GM12878 (cell line): ENCODE measurements at regions of chr14 and their contacts with region 1.

Region 1: DNA sequence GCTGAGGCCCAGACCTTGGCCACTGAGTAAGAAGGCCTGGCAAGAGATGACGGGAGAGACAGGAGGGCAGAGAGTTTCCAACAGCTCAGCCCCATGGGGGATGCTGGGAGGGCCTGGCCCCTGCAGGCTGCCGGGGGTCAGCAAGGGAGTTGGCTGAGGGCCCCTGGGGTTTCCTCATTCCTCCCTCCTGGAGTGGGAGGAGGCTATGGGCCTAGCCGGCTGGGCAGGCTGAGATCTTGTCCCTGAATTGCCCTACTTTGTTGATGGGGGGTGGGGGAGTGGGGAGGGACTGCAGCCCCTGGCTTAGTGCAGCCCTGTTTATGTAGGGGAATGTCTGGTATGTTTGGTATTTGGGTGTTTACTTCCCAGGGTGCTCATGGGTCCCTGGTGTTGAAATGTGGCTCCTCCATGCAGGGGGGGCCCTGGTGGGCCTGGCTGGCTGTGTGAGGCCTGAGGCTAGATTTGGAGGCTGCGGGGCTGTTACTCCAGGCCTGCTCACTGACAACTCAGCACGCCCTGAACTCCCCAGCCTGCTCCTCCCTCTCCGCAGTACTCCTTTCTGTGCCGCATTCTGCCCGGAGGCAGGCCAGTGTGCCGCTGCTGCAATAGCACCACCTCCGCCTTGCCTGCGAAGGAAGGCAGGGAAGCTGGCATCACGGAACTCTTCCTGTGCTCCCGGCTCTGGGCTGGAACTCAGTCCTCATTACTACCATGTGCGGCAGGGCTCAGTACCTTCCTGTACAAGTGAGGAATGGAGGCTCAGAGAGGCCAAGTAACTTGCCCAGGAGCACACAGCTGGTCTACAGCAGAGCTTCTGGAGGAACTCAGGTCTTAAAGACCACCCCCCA is 25.3 kb downstream of the JDP2 start:
- DNase-seq: no peak
- ATAC-seq: no peak
- H3K4me3 ChIP-seq: no peak overlapping the region
- H3K27ac ChIP-seq: peak overlapping the region; percentile 59
- H3K4me1 ChIP-seq: peaks cover 30% of the 10 kb centered on the region
- H3K27me3 ChIP-seq: no peaks in the 10 kb centered on the region
- CTCF ChIP-seq: no peak
- EP300 ChIP-seq: no peak
- POLR2A ChIP-seq: no peak
- RAD21 ChIP-seq: no peak

Region 2: DNA sequence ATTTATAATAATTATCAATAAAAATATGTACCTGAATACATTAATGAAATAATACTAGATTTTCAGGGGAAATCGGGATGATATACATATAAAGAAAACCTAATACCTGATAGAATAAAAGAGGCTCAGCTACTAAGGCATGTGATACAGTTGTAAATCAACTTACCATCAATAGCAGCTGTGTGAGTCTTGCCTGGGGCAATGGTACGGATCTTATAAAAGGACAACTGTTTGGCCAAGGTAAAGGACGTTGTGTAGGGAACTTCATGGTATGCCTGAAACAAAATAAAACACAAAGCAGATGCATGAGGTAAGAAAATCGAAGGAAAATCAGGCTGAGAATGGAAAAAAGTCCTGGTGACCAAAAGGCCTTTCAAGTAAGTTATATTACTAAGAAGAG is 351.6 kb before region 1 on chr14:
- CTCF ChIA-PET with region 1: no interaction called
- POLR2A ChIA-PET with region 1: no interaction called
- RAD21 ChIA-PET with region 1: no interaction called
- SMC1A ChIA-PET with region 1: no interaction called
- in situ Hi-C with region 1: no loop called
- intact Hi-C with region 1: no loop called
- DNase-seq: no peak
- ATAC-seq: no peak
- H3K4me3 ChIP-seq: no peak overlapping the region
- H3K27ac ChIP-seq: no peak overlapping the region
- H3K4me1 ChIP-seq: no peaks in the 10 kb centered on the region
- H3K27me3 ChIP-seq: no peaks in the 10 kb centered on the region
- CTCF ChIP-seq: no peak
- EP300 ChIP-seq: no peak
- POLR2A ChIP-seq: no peak
- RAD21 ChIP-seq: no peak

Region 3: GRCh38 chr14:75132382-75133086 is 320.6 kb before region 1 on chr14:
- CTCF ChIA-PET with region 1: interaction called, 11 read pairs
- POLR2A ChIA-PET with region 1: no interaction called
- RAD21 ChIA-PET with region 1: interaction called, 4 read pairs
- SMC1A ChIA-PET with region 1: interaction called, 3 read pairs
- in situ Hi-C with region 1: no loop called
- intact Hi-C with region 1: loop called (anchors 10 kb)
- DNase-seq: peak; percentile 66
- ATAC-seq: peak; percentile 91
- H3K4me3 ChIP-seq: no peak overlapping the region
- H3K27ac ChIP-seq: no peak overlapping the region
- H3K4me1 ChIP-seq: peaks cover 11% of the 10 kb centered on the region
- H3K27me3 ChIP-seq: no peaks in the 10 kb centered on the region
- CTCF ChIP-seq: peak; percentile 67 to 70 (median 68)
- EP300 ChIP-seq: no peak
- POLR2A ChIP-seq: no peak
- RAD21 ChIP-seq: peak; percentile 94

Region 4: GRCh38 chr14:75283162-75283881 is 169.8 kb before region 1 on chr14:
- CTCF ChIA-PET with region 1: no interaction called
- POLR2A ChIA-PET with region 1: no interaction called
- RAD21 ChIA-PET with region 1: no interaction called
- SMC1A ChIA-PET with region 1: no interaction called
- in situ Hi-C with region 1: no loop called
- intact Hi-C with region 1: no loop called
- DNase-seq: no peak
- ATAC-seq: no peak
- H3K4me3 ChIP-seq: no peak overlapping the region
- H3K27ac ChIP-seq: no peak overlapping the region
- H3K4me1 ChIP-seq: peaks cover 11% of the 10 kb centered on the region
- H3K27me3 ChIP-seq: peaks cover 13 to 17% of the 10 kb centered on the region in 2 experiments
- CTCF ChIP-seq: peak in 2 of 3 experiments; percentile 4 to 22; a peak in 1 of 6 replicates
- EP300 ChIP-seq: no peak
- POLR2A ChIP-seq: no peak
- RAD21 ChIP-seq: no peak

Region 5: DNA sequence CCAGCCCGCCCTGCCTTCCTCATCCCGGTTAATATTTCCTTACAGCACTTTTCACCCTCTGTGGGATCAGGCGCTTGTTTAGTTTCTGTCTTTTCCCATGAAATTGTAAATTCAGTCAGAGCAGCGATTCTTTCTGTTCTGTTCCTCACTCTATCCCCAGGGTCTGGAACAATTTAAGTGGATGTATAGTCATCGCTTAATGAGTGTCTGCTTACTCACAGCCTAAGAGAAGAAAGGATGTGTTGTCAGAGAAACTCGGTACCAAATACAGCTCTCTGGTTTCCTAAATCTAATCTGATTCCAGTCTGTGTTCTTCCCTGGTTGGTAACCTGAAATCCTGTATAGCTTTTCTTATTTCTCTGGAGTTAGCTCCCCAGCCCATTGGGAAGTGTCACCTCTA is 129.6 kb before region 1 on chr14:
- CTCF ChIA-PET with region 1: interaction called, 11 read pairs
- POLR2A ChIA-PET with region 1: no interaction called
- RAD21 ChIA-PET with region 1: interaction called, 9 read pairs
- SMC1A ChIA-PET with region 1: interaction called, 8 read pairs
- in situ Hi-C with region 1: no loop called
- intact Hi-C with region 1: no loop called
- DNase-seq: no peak
- ATAC-seq: no peak
- H3K4me3 ChIP-seq: no peak overlapping the region
- H3K27ac ChIP-seq: no peak overlapping the region
- H3K4me1 ChIP-seq: no peaks in the 10 kb centered on the region
- H3K27me3 ChIP-seq: no peaks in the 10 kb centered on the region; a peak in 1 of 4 replicates
- CTCF ChIP-seq: no peak
- EP300 ChIP-seq: no peak
- POLR2A ChIP-seq: no peak
- RAD21 ChIP-seq: no peak

Region 6: GRCh38 chr14:75399821-75400678 is 53.1 kb before region 1 on chr14:
- CTCF ChIA-PET with region 1: interaction called, 10 read pairs
- POLR2A ChIA-PET with region 1: no interaction called
- RAD21 ChIA-PET with region 1: interaction called, 3 read pairs
- SMC1A ChIA-PET with region 1: interaction called, 5 read pairs
- in situ Hi-C with region 1: no loop called
- intact Hi-C with region 1: no loop called
- DNase-seq: no peak
- ATAC-seq: no peak; the same call in 2 of the 3 replicates
- H3K4me3 ChIP-seq: no peak overlapping the region
- H3K27ac ChIP-seq: no peak overlapping the region
- H3K4me1 ChIP-seq: no peaks in the 10 kb centered on the region
- H3K27me3 ChIP-seq: no peaks in the 10 kb centered on the region
- CTCF ChIP-seq: no peak
- EP300 ChIP-seq: no peak
- POLR2A ChIP-seq: no peak
- RAD21 ChIP-seq: no peak

Region 7: DNA sequence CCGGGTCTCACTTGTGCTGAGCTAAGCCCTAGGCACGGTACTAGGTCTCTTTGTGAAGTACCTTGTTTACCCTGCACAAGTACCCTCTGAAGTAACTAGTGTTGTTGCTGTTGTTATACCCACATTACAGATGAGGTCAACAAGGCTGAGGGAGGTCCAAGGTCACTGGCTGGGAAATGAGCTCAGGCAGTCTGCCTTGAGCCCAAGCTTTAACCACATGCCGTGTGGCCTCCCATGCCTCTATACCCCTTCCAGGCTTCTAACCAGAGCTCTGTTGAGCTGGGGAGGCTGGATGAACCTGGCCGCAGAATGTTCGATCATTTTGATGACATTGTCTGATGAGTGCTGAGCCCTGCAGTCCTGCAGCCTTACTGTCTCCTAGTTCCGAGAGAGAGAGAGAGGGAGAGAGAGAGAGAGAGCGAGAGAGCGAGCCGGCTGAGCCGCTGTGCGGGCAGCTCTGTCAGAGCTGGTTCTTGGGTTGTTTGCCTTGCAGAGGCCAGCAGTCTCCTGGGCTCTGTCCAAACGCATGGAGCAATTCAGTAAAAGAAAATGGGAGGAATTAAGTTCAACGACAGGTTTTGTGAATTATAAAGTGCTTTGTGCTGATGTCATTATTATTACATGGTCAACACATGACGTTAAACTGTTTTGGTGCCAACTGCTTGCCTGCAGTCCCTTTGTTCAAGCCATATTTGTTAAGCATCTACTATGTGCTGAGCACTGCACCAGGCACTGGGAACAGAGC is 12.2 kb before region 1 on chr14:
- CTCF ChIA-PET with region 1: interaction called, 22 read pairs
- POLR2A ChIA-PET with region 1: no interaction called
- RAD21 ChIA-PET with region 1: interaction called, 15 read pairs
- SMC1A ChIA-PET with region 1: interaction called, 16 read pairs
- in situ Hi-C with region 1: no loop called
- intact Hi-C with region 1: no loop called
- DNase-seq: no peak
- ATAC-seq: no peak; the same call in 2 of the 3 replicates
- H3K4me3 ChIP-seq: no peak overlapping the region
- H3K27ac ChIP-seq: peak overlapping the region; percentile 24; the same call in 1 of the 2 replicates
- H3K4me1 ChIP-seq: peaks cover 39% of the 10 kb centered on the region
- H3K27me3 ChIP-seq: no peaks in the 10 kb centered on the region
- CTCF ChIP-seq: no peak
- EP300 ChIP-seq: no peak
- POLR2A ChIP-seq: no peak
- RAD21 ChIP-seq: no peak

Region 8: DNA sequence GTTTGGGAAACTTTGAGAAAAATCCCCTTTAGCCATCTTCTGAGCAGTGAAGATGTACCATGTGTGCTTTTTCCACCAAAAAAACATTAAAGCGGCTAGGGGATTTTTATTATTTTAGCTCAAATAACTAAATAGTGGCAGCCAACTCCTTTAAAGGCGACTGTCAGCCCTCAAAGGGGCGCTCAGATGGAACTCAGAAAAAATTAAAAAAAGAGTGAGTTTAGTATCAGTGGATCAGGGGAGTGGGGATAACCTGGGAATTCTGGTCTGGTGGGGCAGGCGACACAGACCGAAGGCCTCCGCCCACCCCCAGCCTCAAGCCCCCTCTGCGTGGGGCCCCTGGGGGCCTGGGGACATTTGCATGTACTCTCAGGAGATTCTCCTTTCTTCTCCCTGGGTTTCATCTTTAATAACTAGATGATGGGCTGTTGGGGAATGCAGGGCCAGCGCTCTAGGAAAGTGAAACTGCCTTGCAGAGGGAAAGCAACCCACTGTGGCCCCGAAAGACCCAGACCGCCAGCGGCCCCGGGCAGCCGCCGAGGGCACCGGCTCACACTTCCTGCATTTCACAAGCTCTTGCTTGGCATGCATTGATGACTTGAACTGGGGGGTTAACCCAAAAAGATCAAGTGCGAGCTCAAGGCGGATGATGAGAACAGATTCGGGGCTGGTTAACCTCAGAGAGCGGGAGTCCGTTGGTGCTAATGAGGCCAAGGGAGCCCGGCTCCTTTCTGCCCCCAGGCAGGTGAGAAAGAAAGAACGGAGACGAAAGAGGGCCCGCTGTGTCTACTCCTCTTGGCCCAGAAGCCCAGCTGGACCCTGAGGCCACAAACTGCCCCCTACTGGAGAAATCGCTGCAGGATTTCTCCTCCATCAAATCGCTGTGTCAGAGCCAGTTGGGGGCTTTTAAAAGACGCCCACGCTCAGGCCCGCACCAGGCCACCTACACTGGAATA is 61.8 kb after region 1 on chr14:
- CTCF ChIA-PET with region 1: interaction called, 10 read pairs
- POLR2A ChIA-PET with region 1: no interaction called
- RAD21 ChIA-PET with region 1: interaction called, 5 read pairs
- SMC1A ChIA-PET with region 1: interaction called, 15 read pairs
- in situ Hi-C with region 1: no loop called
- intact Hi-C with region 1: no loop called
- DNase-seq: peak; percentile 80
- ATAC-seq: peak; percentile 76
- H3K4me3 ChIP-seq: peak overlapping the region; percentile 73
- H3K27ac ChIP-seq: peak overlapping the region; percentile 97
- H3K4me1 ChIP-seq: peaks cover 54% of the 10 kb centered on the region
- H3K27me3 ChIP-seq: no peaks in the 10 kb centered on the region
- CTCF ChIP-seq: no peak
- EP300 ChIP-seq: peak in 1 of 2 experiments; percentile 73; a peak in 3 of 4 replicates
- POLR2A ChIP-seq: 0 out of 2 replicates have a peak, but pooled peaks have one; percentile 36
- RAD21 ChIP-seq: no peak